ENCODE measurements at regions of chr2 and their contacts with region 1.

Region 1: DNA sequence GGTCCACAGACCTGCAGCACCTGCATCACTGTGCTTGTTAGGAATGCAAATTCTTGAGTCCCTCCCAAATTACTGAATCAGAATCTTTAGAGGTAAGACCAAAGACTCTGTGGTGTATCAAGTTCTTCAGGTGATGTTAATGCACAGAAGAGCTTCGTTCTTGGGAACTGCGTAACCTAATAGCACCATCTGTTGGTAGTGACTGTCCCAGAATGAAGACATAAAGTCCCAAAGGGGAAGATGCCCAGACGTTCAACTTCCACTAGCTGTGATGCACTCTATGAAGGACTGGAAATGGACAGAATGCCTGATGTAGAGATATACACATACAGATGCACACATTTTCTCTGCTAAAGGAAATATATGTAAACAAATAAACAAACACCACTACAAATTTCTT is 576.0 kb downstream of the LRP1B start:
- DNase-seq: peak; percentile 38
- H3K4me3 ChIP-seq: no peak overlapping the region
- H3K27ac ChIP-seq: no peak overlapping the region
- H3K4me1 ChIP-seq: no peaks in the 10 kb centered on the region
- H3K27me3 ChIP-seq: no peaks in the 10 kb centered on the region
- CTCF ChIP-seq: peak; percentile 29 to 33
- POLR2A ChIP-seq: no peak

Region 2: GRCh38 chr2:140586379-140586778 is 968.4 kb before region 1 on chr2:
- CTCF ChIA-PET with region 1: interaction called, 12 read pairs
- POLR2A ChIA-PET with region 1: no interaction called
- dilution Hi-C with region 1: no loop called
- intact Hi-C with region 1: no loop called
- DNase-seq: peak; percentile 42
- H3K4me3 ChIP-seq: no peak overlapping the region
- H3K27ac ChIP-seq: no peak overlapping the region
- H3K4me1 ChIP-seq: no peaks in the 10 kb centered on the region
- H3K27me3 ChIP-seq: no peaks in the 10 kb centered on the region
- CTCF ChIP-seq: peak; percentile 49 to 67
- POLR2A ChIP-seq: no peak

Region 3: GRCh38 chr2:141517852-141518421 is 36.9 kb before region 1 on chr2:
- CTCF ChIA-PET with region 1: no interaction called
- POLR2A ChIA-PET with region 1: no interaction called
- dilution Hi-C with region 1: no loop called
- intact Hi-C with region 1: no loop called
- DNase-seq: no peak
- H3K4me3 ChIP-seq: no peak overlapping the region
- H3K27ac ChIP-seq: no peak overlapping the region
- H3K4me1 ChIP-seq: no peaks in the 10 kb centered on the region
- H3K27me3 ChIP-seq: no peaks in the 10 kb centered on the region
- CTCF ChIP-seq: no peak
- POLR2A ChIP-seq: no peak

Region 4: DNA sequence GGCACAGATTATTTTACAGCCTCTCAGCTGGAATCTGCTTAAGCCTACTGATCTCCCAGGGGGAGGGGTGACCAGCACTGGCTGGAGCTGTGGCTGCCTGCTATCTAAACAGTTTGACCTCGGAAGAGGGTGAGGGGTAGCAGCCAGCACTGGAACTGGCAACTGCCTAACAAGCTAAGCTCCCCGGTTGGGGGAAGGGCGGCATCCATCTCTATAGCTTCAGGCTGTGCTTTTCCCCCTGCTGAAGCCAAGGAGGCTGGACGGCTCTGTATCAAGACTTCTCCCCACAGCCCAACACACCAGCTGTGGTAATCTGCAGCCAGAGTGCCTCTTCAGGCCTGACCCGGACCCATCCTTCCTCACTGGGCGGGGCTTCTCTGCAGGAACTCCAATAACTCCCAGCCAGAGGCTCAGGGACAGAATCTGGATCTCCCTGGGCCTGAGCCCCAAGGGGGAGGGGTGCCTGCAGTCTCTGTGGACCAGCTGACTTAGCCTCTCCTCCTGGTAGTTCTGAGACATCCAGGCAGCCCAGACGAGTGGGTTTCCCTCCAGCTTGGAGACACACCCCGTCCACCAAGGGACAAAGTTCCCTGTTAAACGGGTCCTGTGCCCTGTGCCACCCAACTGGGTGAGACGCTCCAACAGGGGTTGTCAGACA is 15.8 kb after region 1 on chr2:
- CTCF ChIA-PET with region 1: no interaction called
- POLR2A ChIA-PET with region 1: no interaction called
- dilution Hi-C with region 1: no loop called
- intact Hi-C with region 1: no loop called
- DNase-seq: no peak
- H3K4me3 ChIP-seq: no peak overlapping the region
- H3K27ac ChIP-seq: no peak overlapping the region
- H3K4me1 ChIP-seq: no peaks in the 10 kb centered on the region
- H3K27me3 ChIP-seq: no peaks in the 10 kb centered on the region
- CTCF ChIP-seq: no peak
- POLR2A ChIP-seq: no peak

Region 5: DNA sequence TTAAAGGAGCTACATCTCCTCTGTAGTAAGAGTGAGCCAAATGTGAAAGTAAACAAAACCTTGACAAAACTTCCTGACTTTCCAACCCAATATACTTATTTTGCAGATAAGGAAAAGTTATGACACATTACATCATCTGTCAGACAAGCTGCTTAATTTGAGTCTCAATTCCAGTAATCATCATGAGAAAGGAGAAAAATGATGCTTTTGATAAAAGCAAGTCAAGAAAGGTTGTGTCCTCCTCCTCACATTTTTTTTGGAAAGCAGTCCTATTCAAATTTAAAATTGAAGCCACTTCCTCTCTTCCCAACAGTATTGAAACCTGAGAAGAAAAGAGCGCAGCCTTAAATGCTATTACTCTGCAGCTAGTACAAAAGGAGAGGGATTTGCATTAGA is 56.4 kb after region 1 on chr2:
- CTCF ChIA-PET with region 1: interaction called, 15 read pairs
- POLR2A ChIA-PET with region 1: no interaction called
- dilution Hi-C with region 1: no loop called
- intact Hi-C with region 1: no loop called
- DNase-seq: peak; percentile 87
- H3K4me3 ChIP-seq: peak overlapping the region in 2 of 3 experiments; percentile 15 to 54
- H3K27ac ChIP-seq: peak overlapping the region; percentile 73
- H3K4me1 ChIP-seq: peaks cover 20% of the 10 kb centered on the region
- H3K27me3 ChIP-seq: no peaks in the 10 kb centered on the region
- CTCF ChIP-seq: no peak
- POLR2A ChIP-seq: no peak

Region 6: DNA sequence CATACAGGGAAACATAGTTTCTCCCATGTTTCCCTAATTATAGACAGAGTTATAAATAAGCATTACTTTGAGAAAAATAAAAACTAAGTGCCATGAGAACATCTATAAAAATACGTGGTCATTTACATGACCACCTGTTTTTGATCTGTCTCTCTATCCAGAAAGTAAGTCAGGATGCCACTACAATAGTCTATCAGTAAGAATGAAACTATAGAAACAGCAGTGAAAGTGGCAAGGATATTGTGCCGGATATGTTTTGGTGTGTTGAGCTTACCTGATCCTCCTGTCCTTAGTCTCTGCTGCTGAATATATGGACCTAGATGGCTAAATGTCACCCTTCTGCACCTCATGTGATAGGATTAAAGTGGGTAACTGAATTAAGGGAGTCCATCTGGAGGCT is 63.6 kb after region 1 on chr2:
- CTCF ChIA-PET with region 1: no interaction called
- POLR2A ChIA-PET with region 1: no interaction called
- dilution Hi-C with region 1: no loop called
- intact Hi-C with region 1: loop called (anchors 2 kb)
- DNase-seq: no peak
- H3K4me3 ChIP-seq: no peak overlapping the region
- H3K27ac ChIP-seq: no peak overlapping the region
- H3K4me1 ChIP-seq: no peaks in the 10 kb centered on the region
- H3K27me3 ChIP-seq: no peaks in the 10 kb centered on the region
- CTCF ChIP-seq: no peak
- POLR2A ChIP-seq: no peak

Region 7: DNA sequence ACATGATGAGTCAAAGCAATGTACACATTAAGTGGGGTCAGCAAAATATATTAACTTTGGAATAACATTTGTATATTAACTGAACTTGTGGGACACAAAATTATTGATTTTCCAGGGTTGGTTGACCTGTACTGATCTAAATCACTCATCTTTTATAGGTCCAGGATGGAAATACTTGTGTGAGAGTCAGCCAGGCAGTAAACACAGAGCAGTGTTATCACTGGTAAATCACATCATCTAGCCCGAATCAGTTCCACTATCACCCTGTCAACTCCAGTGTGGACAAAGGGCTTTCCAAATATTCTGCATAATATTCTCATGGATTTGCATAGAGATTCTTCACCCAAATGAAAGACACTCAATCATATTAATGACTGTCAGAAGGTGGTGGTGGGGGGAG is 280.3 kb after region 1 on chr2:
- CTCF ChIA-PET with region 1: no interaction called
- POLR2A ChIA-PET with region 1: no interaction called
- dilution Hi-C with region 1: no loop called
- intact Hi-C with region 1: no loop called
- DNase-seq: no peak
- H3K4me3 ChIP-seq: no peak overlapping the region
- H3K27ac ChIP-seq: no peak overlapping the region
- H3K4me1 ChIP-seq: no peaks in the 10 kb centered on the region
- H3K27me3 ChIP-seq: no peaks in the 10 kb centered on the region
- CTCF ChIP-seq: no peak
- POLR2A ChIP-seq: no peak

Region 8: GRCh38 chr2:142140434-142140845 is 585.6 kb after region 1 on chr2:
- CTCF ChIA-PET with region 1: interaction called, 19 read pairs
- POLR2A ChIA-PET with region 1: no interaction called
- dilution Hi-C with region 1: no loop called
- intact Hi-C with region 1: no loop called
- DNase-seq: peak; percentile 36
- H3K4me3 ChIP-seq: no peak overlapping the region
- H3K27ac ChIP-seq: no peak overlapping the region
- H3K4me1 ChIP-seq: no peaks in the 10 kb centered on the region
- H3K27me3 ChIP-seq: peaks cover 2 to 7% of the 10 kb centered on the region in 2 experiments
- CTCF ChIP-seq: peak in 1 of 2 donors; percentile 24
- POLR2A ChIP-seq: no peak

Measured in endothelial cell of umbilical vein (primary cell).